ENCODE measurements at regions of chr2 and their contacts with region 1.

Region 1: DNA sequence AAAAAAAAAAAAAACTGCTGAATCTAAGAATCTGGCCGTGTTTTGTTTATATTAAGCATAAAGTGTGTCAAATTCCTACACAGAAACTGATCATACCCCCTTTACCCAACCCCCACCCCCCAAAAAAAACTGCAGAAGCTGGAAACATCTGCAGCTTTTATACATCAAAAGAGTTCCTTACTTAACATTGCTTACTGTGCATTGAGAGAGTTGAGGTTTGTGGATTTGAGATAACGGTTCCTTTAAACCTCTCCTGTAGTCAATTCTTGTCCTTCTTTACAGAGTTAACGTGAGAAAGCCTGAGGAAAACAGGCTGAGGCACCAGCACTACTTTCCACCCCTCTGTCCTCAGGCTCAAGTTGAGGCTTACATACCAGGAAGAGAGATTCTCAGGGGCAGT is 34.5 kb downstream of the FRZB start:
- DNase-seq: no peak
- ATAC-seq: no peak
- H3K4me3 ChIP-seq: no peak overlapping the region
- H3K4me3 Mint-ChIP-seq: no peak overlapping the region
- H3K27ac ChIP-seq: no peak overlapping the region
- H3K27ac Mint-ChIP-seq: no peak overlapping the region
- H3K4me1 ChIP-seq: no peaks in the 10 kb centered on the region
- H3K4me1 Mint-ChIP-seq: no peaks in the 10 kb centered on the region
- H3K27me3 ChIP-seq: no peaks in the 10 kb centered on the region
- H3K27me3 Mint-ChIP-seq: peaks cover 12 to 23% of the 10 kb centered on the region in 2 donors

Region 2: GRCh38 chr2:182814380-182814779 is 17.5 kb before region 1 on chr2:
- CTCF ChIA-PET with region 1: no interaction called
- POLR2A ChIA-PET with region 1: no interaction called
- DNase-seq: no peak
- ATAC-seq: no peak
- H3K4me3 ChIP-seq: no peak overlapping the region
- H3K4me3 Mint-ChIP-seq: no peak overlapping the region
- H3K27ac ChIP-seq: no peak overlapping the region
- H3K27ac Mint-ChIP-seq: no peak overlapping the region
- H3K4me1 ChIP-seq: no peaks in the 10 kb centered on the region
- H3K4me1 Mint-ChIP-seq: no peaks in the 10 kb centered on the region
- H3K27me3 ChIP-seq: peaks cover 0 to 10% of the 10 kb centered on the region in 2 experiments
- H3K27me3 Mint-ChIP-seq: peaks cover 12 to 13% of the 10 kb centered on the region in 2 donors

Region 3: GRCh38 chr2:182845794-182846417 is 14.0 kb after region 1 on chr2:
- CTCF ChIA-PET with region 1: no interaction called
- POLR2A ChIA-PET with region 1: interaction called in 1 of 2 experiments, 11 read pairs
- DNase-seq: no peak
- ATAC-seq: no peak
- H3K4me3 ChIP-seq: no peak overlapping the region
- H3K4me3 Mint-ChIP-seq: no peak overlapping the region
- H3K27ac ChIP-seq: no peak overlapping the region
- H3K27ac Mint-ChIP-seq: no peak overlapping the region
- H3K4me1 ChIP-seq: no peaks in the 10 kb centered on the region
- H3K4me1 Mint-ChIP-seq: no peaks in the 10 kb centered on the region
- H3K27me3 ChIP-seq: peaks cover 0 to 4% of the 10 kb centered on the region in 2 experiments
- H3K27me3 Mint-ChIP-seq: peaks cover 12 to 29% of the 10 kb centered on the region in 2 donors

Region 4: GRCh38 chr2:182977463-182977862 is 145.5 kb after region 1 on chr2:
- CTCF ChIA-PET with region 1: no interaction called
- POLR2A ChIA-PET with region 1: no interaction called
- DNase-seq: no peak
- ATAC-seq: no peak
- H3K4me3 ChIP-seq: no peak overlapping the region
- H3K4me3 Mint-ChIP-seq: no peak overlapping the region
- H3K27ac ChIP-seq: no peak overlapping the region
- H3K27ac Mint-ChIP-seq: no peak overlapping the region
- H3K4me1 ChIP-seq: no peaks in the 10 kb centered on the region
- H3K4me1 Mint-ChIP-seq: no peaks in the 10 kb centered on the region
- H3K27me3 ChIP-seq: no peaks in the 10 kb centered on the region
- H3K27me3 Mint-ChIP-seq: no peaks in the 10 kb centered on the region